Heart right ventricle (tissue), 16 donors: ENCODE measurements at regions of chr15 and their contacts with region 1.

Region 1: GRCh38 chr15:52780172-52780980 is 9.8 kb downstream of the ONECUT1 start:
- DNase-seq: peak; percentile 45 to 57
- ATAC-seq: peak in 4 of 8 donors; percentile 57 to 73 (median 62)
- H3K4me3 ChIP-seq: peak overlapping the region in 5 of 10 donors; percentile 18 to 31 (median 27)
- H3K27ac ChIP-seq: peak overlapping the region in 1 of 10 donors; percentile 31
- H3K4me1 ChIP-seq: peaks cover 3 to 38% (median 21%) of the 10 kb centered on the region in 9 donors
- H3K27me3 ChIP-seq: peaks cover 18 to 98% (median 94%) of the 10 kb centered on the region in 7 donors
- CTCF ChIP-seq: peak; percentile 64 to 92 (median 85)

Region 2: DNA sequence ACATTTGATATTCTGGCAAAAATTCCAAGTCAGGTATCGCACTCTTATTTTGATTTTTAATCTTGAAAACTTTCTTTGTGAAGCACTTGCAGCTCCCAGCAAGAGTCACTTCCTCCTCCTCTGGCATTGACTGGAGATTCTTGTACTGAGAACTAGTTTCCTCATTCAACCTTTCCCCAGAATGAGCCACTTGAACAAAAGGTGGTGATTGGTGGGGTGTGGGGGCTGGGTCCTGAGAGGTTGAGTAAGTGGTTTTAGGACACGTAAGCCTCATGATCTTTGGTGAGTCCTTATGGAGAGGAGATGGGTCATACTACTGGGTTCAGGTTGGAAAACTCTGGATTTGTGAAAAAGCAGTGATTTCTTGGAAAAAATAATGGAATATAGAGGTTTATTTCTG is 42.1 kb after region 1 on chr15:
- intact Hi-C with region 1: no loop called
- DNase-seq: no peak
- ATAC-seq: no peak
- H3K4me3 ChIP-seq: no peak overlapping the region
- H3K27ac ChIP-seq: no peak overlapping the region
- H3K4me1 ChIP-seq: no peaks in the 10 kb centered on the region
- H3K27me3 ChIP-seq: peaks cover 0 to 49% (median 30%) of the 10 kb centered on the region in 7 donors
- CTCF ChIP-seq: no peak

Region 3: GRCh38 chr15:53197426-53197839 is 417.1 kb after region 1 on chr15:
- intact Hi-C with region 1: loop called in 8 of 10 experiments (anchors 2 to 10 kb)
- DNase-seq: peak; percentile 12 to 31
- ATAC-seq: peak in 3 of 8 donors; percentile 38 to 60 (median 57)
- H3K4me3 ChIP-seq: no peak overlapping the region
- H3K27ac ChIP-seq: no peak overlapping the region
- H3K4me1 ChIP-seq: peaks cover 0 to 6% (median 0%) of the 10 kb centered on the region in 9 donors
- H3K27me3 ChIP-seq: peaks cover 0 to 30% (median 6%) of the 10 kb centered on the region in 7 donors
- CTCF ChIP-seq: peak; percentile 36 to 84 (median 70)

Region 4: DNA sequence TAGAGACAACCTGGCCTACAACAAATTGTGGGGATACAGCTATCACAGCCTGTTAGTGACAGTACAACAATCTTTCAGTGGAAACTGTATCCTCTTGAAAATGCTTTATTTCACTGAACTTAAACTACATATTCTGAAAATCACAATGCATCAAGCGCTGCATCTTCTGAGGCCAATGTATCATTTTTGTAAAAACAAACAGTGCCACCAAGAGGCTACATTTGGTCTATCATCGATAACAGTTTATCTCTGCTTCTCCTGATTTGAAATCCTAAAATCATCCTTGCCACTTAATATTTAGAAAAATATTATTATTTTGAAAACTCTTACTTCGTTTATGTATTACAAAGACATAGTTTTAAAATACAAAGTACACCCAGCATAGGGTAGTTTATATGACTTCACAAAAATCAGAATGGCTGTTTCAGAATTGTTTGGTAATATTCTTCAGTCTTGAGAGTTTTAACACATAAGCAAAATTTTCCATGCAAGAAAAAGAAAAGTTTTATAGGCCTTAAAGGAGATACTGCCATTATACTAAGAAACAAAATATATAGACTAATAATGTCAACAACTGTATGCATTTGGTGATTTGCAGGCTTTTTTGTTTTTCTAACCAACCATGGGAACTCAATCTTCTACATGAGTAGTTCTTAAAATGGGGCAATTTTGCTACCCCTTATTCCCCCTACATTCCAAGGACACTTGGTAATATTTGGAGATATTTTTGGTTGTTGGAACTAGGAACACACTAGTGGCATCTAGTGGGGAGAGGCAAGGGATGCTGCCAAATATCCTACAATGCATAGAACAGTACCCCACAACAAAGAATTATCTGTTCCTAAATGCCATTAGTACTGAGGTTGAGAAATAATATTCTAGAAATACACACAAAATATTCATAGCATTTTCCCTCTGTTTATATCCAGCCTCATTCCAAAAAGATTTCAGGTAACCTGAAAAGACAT is 936.8 kb after region 1 on chr15:
- intact Hi-C with region 1: loop called in 7 of 10 experiments (anchors 5 to 10 kb)
- DNase-seq: no peak
- ATAC-seq: no peak
- H3K4me3 ChIP-seq: no peak overlapping the region
- H3K27ac ChIP-seq: no peak overlapping the region
- H3K4me1 ChIP-seq: no peaks in the 10 kb centered on the region
- H3K27me3 ChIP-seq: peaks cover 0 to 3% (median 0%) of the 10 kb centered on the region in 7 donors
- CTCF ChIP-seq: peak in 5 of 9 donors; percentile 12 to 47 (median 26)